ENCODE measurements at regions of chr5 and their contacts with region 1.

Region 1: GRCh38 chr5:134527146-134527960 is 1.9 kb downstream of the JADE2 start:
- DNase-seq: peak; percentile 76 to 86
- H3K4me3 ChIP-seq: peak overlapping the region; percentile 89
- H3K27ac ChIP-seq: peak overlapping the region; percentile 52; the same call in 1 of the 2 replicates
- H3K4me1 ChIP-seq: peaks cover 20% of the 10 kb centered on the region
- H3K27me3 ChIP-seq: no peaks in the 10 kb centered on the region
- CTCF ChIP-seq: peak; percentile 89

Region 2: GRCh38 chr5:134296213-134296612 is 231.1 kb before region 1 on chr5:
- CTCF ChIA-PET with region 1: no interaction called
- POLR2A ChIA-PET with region 1: interaction called, 19 read pairs
- intact Hi-C with region 1: no loop called
- DNase-seq: no peak
- H3K4me3 ChIP-seq: no peak overlapping the region
- H3K27ac ChIP-seq: no peak overlapping the region
- H3K4me1 ChIP-seq: no peaks in the 10 kb centered on the region
- H3K27me3 ChIP-seq: no peaks in the 10 kb centered on the region
- CTCF ChIP-seq: no peak

Region 3: GRCh38 chr5:134436523-134437339 is 90.6 kb before region 1 on chr5:
- CTCF ChIA-PET with region 1: no interaction called
- POLR2A ChIA-PET with region 1: interaction called, 3 read pairs
- intact Hi-C with region 1: loop called (anchors 1 kb)
- DNase-seq: peak; percentile 84 to 91
- H3K4me3 ChIP-seq: peak overlapping the region; percentile 47; the same call in 1 of the 2 replicates
- H3K27ac ChIP-seq: peak overlapping the region; percentile 80
- H3K4me1 ChIP-seq: peaks cover 61% of the 10 kb centered on the region
- H3K27me3 ChIP-seq: no peaks in the 10 kb centered on the region
- CTCF ChIP-seq: no peak

Region 4: GRCh38 chr5:134511788-134512650 is 15.3 kb before region 1 on chr5:
- CTCF ChIA-PET with region 1: interaction called, 4 read pairs
- POLR2A ChIA-PET with region 1: interaction called, 22 read pairs
- intact Hi-C with region 1: loop called (anchors 1 kb)
- DNase-seq: peak; percentile 73
- H3K4me3 ChIP-seq: peak overlapping the region; percentile 43; the same call in 1 of the 2 replicates
- H3K27ac ChIP-seq: peak overlapping the region; percentile 92
- H3K4me1 ChIP-seq: peaks cover 64% of the 10 kb centered on the region
- H3K27me3 ChIP-seq: no peaks in the 10 kb centered on the region
- CTCF ChIP-seq: peak; percentile 67

Region 5: GRCh38 chr5:134577796-134578363 is 50.5 kb after region 1 on chr5:
- CTCF ChIA-PET with region 1: no interaction called
- POLR2A ChIA-PET with region 1: no interaction called
- intact Hi-C with region 1: loop called (anchors 2 kb)
- DNase-seq: peak in 1 of 2 experiments; percentile 69
- H3K4me3 ChIP-seq: no peak overlapping the region
- H3K27ac ChIP-seq: no peak overlapping the region
- H3K4me1 ChIP-seq: no peaks in the 10 kb centered on the region
- H3K27me3 ChIP-seq: no peaks in the 10 kb centered on the region
- CTCF ChIP-seq: peak; percentile 84

Region 6: DNA sequence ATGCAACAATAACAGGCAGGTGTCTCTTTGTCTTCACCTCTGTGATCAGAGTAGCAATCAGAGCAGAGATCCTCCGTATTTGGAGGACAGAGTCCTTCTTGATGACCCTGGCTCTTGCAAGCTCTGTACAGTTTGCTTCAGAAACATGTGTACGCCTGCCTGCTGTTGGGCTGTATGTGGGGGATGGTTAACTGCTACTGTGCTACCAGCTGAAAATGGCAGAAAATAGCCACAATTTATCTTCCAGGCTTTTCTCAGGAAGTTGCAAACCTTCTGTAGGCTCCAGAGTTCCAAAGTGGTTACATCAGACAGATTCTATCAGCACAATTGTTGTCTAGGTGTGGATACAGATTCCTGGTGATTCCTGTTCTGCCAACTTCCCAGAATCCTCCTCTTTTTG is 266.7 kb after region 1 on chr5:
- CTCF ChIA-PET with region 1: no interaction called
- POLR2A ChIA-PET with region 1: no interaction called
- intact Hi-C with region 1: no loop called
- DNase-seq: no peak
- H3K4me3 ChIP-seq: no peak overlapping the region
- H3K27ac ChIP-seq: no peak overlapping the region
- H3K4me1 ChIP-seq: no peaks in the 10 kb centered on the region
- H3K27me3 ChIP-seq: no peaks in the 10 kb centered on the region
- CTCF ChIP-seq: no peak

Measured in PC-9 (cell line).